Caco-2 (cell line): ENCODE measurements at regions of chr21 and their contacts with region 1.

Region 1: DNA sequence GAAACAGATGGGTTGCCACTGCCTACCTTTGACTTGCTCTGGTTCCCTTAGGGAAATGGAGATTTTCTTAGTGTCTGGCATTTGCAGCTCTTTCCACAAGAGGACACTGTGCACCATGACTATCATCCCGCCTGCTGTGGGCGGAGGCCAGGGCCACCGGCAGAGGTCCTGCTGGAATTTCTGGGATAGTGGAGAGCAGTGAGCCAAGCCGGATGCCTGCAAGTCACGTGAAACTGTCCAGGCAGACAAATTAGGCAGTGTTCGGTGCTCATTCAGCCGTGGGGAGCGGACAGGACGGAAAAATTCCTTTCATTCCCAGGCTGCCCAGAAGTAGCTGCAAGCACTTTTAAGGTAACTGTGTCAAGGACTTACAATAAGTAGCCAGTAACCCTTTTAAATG is 43.4 kb downstream of the IGSF5 start:
- DNase-seq: peak; percentile 89 to 92
- H3K4me3 ChIP-seq: no peak overlapping the region
- H3K4me3 Mint-ChIP-seq: peak overlapping the region; percentile 67
- H3K27ac Mint-ChIP-seq: peak overlapping the region; percentile 19
- H3K4me1 ChIP-seq: no peaks in the 10 kb centered on the region
- H3K4me1 Mint-ChIP-seq: no peaks in the 10 kb centered on the region
- H3K27me3 ChIP-seq: no peaks in the 10 kb centered on the region
- H3K27me3 Mint-ChIP-seq: no peaks in the 10 kb centered on the region
- CTCF ChIP-seq: peak; percentile 90 to 98

Region 2: DNA sequence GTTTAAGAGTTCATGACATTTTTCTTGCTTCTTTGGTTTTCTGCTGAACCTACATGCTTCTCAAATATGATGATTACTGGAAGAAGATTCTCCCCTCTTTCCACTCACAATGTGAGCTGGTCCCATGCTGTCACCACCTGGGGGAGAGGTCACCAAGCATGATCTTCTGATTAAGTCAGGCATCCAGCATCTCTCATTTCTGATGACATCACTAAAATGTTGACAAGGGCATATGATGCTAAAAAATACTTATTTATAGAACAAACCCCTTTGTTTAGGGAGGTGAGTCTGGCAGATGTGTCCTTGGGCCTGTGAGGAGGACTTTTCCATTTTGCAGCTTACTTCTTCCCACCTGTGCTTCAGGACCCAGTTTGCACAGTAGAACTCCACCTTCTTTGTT is 36.9 kb after region 1 on chr21:
- CTCF ChIA-PET with region 1: no interaction called
- POLR2A ChIA-PET with region 1: no interaction called
- intact Hi-C with region 1: no loop called
- DNase-seq: no peak
- H3K4me3 ChIP-seq: no peak overlapping the region
- H3K4me3 Mint-ChIP-seq: no peak overlapping the region
- H3K27ac Mint-ChIP-seq: no peak overlapping the region
- H3K4me1 ChIP-seq: no peaks in the 10 kb centered on the region
- H3K4me1 Mint-ChIP-seq: no peaks in the 10 kb centered on the region
- H3K27me3 ChIP-seq: no peaks in the 10 kb centered on the region
- H3K27me3 Mint-ChIP-seq: no peaks in the 10 kb centered on the region
- CTCF ChIP-seq: no peak

Region 3: GRCh38 chr21:39867198-39867650 is 78.8 kb after region 1 on chr21 and contains the start of gene PCP4:
- CTCF ChIA-PET with region 1: interaction called, 8 read pairs
- POLR2A ChIA-PET with region 1: no interaction called
- intact Hi-C with region 1: loop called (anchors 1 kb)
- DNase-seq: peak; percentile 71 to 75
- H3K4me3 ChIP-seq: no peak within 1 kb of the TSS
- H3K4me3 Mint-ChIP-seq: peak within 1 kb of the TSS; percentile 61
- H3K27ac Mint-ChIP-seq: peak within 1 kb of the TSS; percentile 28
- H3K4me1 ChIP-seq: no peaks in the 10 kb centered on the region
- H3K4me1 Mint-ChIP-seq: peaks cover 7% of the 10 kb centered on the region
- H3K27me3 ChIP-seq: no peaks in the 10 kb centered on the region
- H3K27me3 Mint-ChIP-seq: peaks cover 8% of the 10 kb centered on the region
- CTCF ChIP-seq: peak; percentile 88 to 94
- total RNA-seq, gene PCP4: 4.0 and 4.7 TPM in 2 replicates

Region 4: DNA sequence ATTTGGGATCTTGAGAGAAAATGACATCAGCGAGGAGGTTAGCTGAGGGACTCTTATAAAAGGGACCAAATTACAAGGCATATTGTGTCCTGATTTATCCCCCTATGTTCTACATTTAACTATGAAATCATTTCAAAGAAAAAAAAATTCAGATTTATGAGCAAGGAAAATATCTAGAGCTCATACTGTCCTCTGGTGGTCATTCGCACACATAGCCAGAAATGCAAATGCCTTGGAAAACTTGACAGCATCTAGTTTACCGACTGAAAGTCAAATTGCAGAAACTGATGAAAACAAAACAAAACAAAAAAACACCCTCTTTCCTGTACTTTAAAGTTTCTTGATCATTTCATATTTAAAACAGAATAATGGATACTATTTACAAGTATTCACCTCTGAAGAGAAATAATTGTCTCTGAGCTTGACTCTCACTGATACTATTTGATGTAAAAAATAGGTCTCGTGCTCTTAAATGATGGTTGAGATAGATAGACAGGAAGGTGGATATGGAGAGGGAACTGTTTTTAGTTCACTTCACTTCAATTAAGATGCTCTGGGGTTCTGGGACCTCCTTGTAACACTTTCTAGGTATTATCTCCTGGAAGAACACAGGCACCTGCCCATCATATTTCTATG is 332.7 kb after region 1 on chr21:
- CTCF ChIA-PET with region 1: interaction called, 25 read pairs
- POLR2A ChIA-PET with region 1: no interaction called
- intact Hi-C with region 1: loop called (anchors 1 kb)
- DNase-seq: peak in 1 of 2 experiments; percentile 14
- H3K4me3 ChIP-seq: no peak overlapping the region
- H3K4me3 Mint-ChIP-seq: no peak overlapping the region
- H3K27ac Mint-ChIP-seq: no peak overlapping the region
- H3K4me1 ChIP-seq: no peaks in the 10 kb centered on the region
- H3K4me1 Mint-ChIP-seq: no peaks in the 10 kb centered on the region
- H3K27me3 ChIP-seq: no peaks in the 10 kb centered on the region
- H3K27me3 Mint-ChIP-seq: peaks cover 14% of the 10 kb centered on the region
- CTCF ChIP-seq: peak; percentile 86 to 91

Region 5: DNA sequence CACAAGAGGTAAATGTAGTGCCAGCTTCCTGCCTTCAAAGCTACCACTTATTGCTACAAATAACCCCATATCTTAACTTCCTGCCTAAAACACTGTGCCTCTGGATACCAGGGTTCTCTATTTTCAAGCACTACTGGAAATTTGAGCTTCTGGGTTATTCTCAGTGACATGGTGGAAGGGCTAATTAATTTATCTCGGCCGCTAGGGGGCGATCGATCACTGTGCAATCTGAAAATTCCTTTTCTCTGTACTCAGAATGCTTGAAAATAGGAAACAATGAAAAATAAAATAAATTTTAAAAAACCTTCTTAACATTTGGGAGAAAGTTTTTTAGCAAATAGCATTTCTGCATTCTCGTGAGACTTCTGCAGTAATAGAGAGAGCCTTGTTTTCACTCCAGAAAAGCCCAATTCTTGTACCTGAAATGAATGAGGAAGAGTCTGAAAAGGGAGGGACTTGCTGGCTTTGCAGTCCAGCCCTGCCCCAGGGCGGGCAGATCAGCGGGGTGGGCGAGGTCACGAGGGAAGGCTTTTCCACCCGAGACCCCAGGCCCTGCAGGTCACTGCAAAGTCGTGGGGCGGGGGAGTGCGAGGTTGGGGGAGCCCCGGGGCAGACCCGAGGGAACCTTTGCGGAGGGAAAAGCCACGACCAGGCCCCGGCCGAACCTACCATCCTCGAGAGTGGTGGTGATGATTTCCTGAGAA is 355.6 kb after region 1 on chr21:
- CTCF ChIA-PET with region 1: no interaction called
- POLR2A ChIA-PET with region 1: no interaction called
- intact Hi-C with region 1: loop called (anchors 5 kb)
- DNase-seq: peak in 1 of 2 experiments; percentile 57
- H3K4me3 ChIP-seq: no peak overlapping the region
- H3K4me3 Mint-ChIP-seq: no peak overlapping the region
- H3K27ac Mint-ChIP-seq: no peak overlapping the region
- H3K4me1 ChIP-seq: no peaks in the 10 kb centered on the region
- H3K4me1 Mint-ChIP-seq: no peaks in the 10 kb centered on the region
- H3K27me3 ChIP-seq: no peaks in the 10 kb centered on the region
- H3K27me3 Mint-ChIP-seq: peaks cover 4% of the 10 kb centered on the region
- CTCF ChIP-seq: peak; percentile 57 to 77

Region 6: DNA sequence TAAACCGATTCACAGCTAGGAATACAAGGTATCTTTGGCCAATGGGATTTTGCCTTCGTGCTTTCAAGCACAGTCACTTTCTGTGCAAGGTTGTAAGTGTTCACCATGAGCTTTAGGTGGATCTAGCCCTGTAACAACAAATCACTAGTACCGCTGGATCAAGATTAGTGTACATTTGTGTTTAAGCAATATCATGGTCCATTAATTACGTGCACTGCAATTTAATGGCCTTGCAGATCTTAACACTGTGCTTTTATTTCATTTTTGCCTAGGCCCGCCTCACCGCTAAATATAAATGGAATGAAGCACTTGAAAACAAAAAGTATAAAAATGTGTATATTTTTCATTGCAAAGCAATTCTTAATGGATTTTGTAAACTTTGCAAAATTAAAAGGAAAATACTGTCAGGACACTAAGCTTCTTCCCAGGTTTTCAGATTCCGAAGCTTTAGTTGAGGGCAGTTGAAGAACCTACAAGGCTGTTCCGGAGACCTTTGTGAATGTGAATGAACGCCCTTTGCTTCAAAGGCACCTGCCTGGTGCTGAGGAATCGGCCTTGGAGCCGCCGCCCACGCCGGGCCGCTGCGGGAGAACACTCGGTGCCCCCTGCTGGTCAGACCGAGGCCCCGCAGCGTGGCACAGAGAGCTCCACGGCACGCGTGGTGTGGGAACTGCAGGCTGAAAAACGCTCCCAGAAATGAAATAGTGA is 597.7 kb after region 1 on chr21:
- CTCF ChIA-PET with region 1: interaction called, 3 read pairs
- POLR2A ChIA-PET with region 1: no interaction called
- intact Hi-C with region 1: loop called (anchors 5 kb)
- DNase-seq: peak; percentile 55 to 71
- H3K4me3 ChIP-seq: no peak overlapping the region
- H3K4me3 Mint-ChIP-seq: no peak overlapping the region
- H3K27ac Mint-ChIP-seq: no peak overlapping the region
- H3K4me1 ChIP-seq: 0 out of 2 replicates have a peak, but pooled peaks cover 6% of the 10 kb centered on the region
- H3K4me1 Mint-ChIP-seq: no peaks in the 10 kb centered on the region
- H3K27me3 ChIP-seq: no peaks in the 10 kb centered on the region
- H3K27me3 Mint-ChIP-seq: peaks cover 14% of the 10 kb centered on the region
- CTCF ChIP-seq: peak; percentile 88 to 89